Dorsolateral prefrontal cortex (tissue), 120 donors: ENCODE measurements at regions of chr16 and their contacts with region 1.

Region 1: GRCh38 chr16:14399378-14400284 is 230.4 kb downstream of the PARN start:
- DNase-seq: peak in 6 of 10 donors; percentile 33 to 63 (median 42)
- H3K4me3 ChIP-seq: peak overlapping the region in 5 of 59 donors; percentile 1 to 20 (median 8)
- H3K27ac ChIP-seq: peak overlapping the region in 51 of 59 donors; percentile 12 to 88 (median 69)
- H3K27me3 ChIP-seq: no peaks in the 10 kb centered on the region
- CTCF ChIP-seq: no peak

Region 2: GRCh38 chr16:14300705-14301168 is 98.9 kb before region 1 on chr16:
- intact Hi-C with region 1: loop called in 1 of 2 experiments (anchors 10 kb)
- DNase-seq: peak in 6 of 10 donors; percentile 62 to 70 (median 64)
- H3K4me3 ChIP-seq: peak overlapping the region in 53 of 59 donors; percentile 13 to 93 (median 85)
- H3K27ac ChIP-seq: peak overlapping the region in 25 of 59 donors; percentile 3 to 83 (median 59)
- H3K27me3 ChIP-seq: no peaks in the 10 kb centered on the region
- CTCF ChIP-seq: peak in 55 of 56 donors; percentile 34 to 78 (median 63)

Region 3: DNA sequence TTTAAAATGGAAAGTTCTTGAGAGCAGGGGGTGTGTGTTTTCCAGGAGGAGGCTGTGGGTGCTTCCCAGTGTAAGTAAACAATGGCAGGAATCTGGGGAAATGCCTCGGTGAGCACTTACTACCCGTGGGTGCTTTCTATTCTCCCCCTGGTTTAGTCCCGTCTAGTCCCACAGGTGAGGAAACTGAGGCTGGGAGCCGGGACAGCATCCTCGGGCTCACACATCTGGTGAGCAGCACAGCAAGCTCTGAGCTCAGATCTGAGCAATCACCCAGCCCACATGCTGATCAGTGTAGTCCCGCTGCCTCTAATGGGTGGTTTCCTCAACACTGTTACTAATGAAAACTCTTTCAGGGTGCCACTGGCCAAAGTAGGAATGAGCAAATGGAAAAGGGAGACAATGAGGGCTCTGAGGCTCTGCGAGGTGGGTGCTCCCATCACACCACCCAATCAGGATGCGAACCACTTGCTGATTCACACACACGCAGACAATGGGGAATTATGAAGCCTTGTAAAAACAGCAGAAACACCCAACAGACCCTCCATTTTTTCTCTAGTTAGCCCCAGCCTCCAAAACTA is 27.8 kb after region 1 on chr16:
- intact Hi-C with region 1: loop called in 1 of 2 experiments (anchors 2 kb)
- DNase-seq: peak in 8 of 10 donors; percentile 49 to 83 (median 68)
- H3K4me3 ChIP-seq: peak overlapping the region in 16 of 59 donors; percentile 1 to 36 (median 16)
- H3K27ac ChIP-seq: peak overlapping the region; percentile 58 to 97 (median 93)
- H3K27me3 ChIP-seq: no peaks in the 10 kb centered on the region
- CTCF ChIP-seq: peak in 2 of 56 donors; percentile 12 to 38